Calu3 (cell line): ENCODE measurements at regions of chr5 and their contacts with region 1.

Region 1: GRCh38 chr5:154956712-154957111 is 15.8 kb downstream of the MRPL22 start:
- DNase-seq: no peak
- H3K4me3 Mint-ChIP-seq: no peak overlapping the region
- H3K27ac Mint-ChIP-seq: no peak overlapping the region
- H3K4me1 Mint-ChIP-seq: no peaks in the 10 kb centered on the region
- H3K27me3 Mint-ChIP-seq: no peaks in the 10 kb centered on the region
- CTCF ChIP-seq: no peak

Region 2: DNA sequence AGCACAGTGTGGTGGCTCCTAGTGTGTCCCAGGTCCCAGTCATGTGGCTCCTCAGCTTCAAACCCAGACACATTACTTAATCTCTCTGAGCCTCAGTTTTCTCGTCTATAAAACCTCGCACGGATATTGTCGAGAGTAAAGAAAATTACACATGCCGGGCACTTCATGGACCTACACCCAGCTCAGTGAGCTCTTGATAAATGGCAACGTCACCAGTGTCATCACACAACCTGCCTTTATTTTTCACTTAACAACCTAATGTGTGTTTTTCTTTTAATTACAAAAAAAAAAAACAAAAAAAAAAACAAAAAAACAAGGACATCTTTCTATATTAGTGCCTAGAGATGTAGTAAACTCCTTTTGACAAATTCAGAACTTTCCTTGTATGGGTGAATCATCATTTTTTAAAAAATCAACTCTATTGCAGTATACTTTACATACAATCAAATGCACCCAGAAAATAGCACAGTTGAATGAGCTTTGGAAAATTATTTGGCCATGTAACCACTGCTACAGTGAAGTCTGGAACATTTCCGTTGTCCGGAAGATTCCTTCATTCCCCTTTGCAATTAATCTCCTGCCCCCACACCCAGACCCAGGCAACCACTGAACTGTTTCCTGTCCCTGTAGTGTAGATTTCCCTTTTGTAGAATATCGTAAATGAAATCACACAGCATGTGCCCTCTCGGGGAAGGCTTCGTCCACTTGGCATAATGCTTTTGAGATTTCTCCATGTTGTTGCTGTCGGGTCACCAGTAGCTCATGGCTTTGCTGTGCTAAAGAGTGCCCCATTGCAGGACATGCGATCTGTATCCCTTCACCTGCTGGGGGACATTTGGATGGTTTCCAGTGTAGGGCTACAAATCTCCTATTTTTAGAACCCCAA is 302.0 kb before region 1 on chr5:
- CTCF ChIA-PET with region 1: interaction called, 12 read pairs
- intact Hi-C with region 1: no loop called
- DNase-seq: no peak
- H3K4me3 Mint-ChIP-seq: no peak overlapping the region
- H3K27ac Mint-ChIP-seq: no peak overlapping the region
- H3K4me1 Mint-ChIP-seq: peaks cover 5% of the 10 kb centered on the region
- H3K27me3 Mint-ChIP-seq: no peaks in the 10 kb centered on the region
- CTCF ChIP-seq: no peak